H1 (cell line): ENCODE measurements at regions of chr13 and their contacts with region 1.

Region 1: DNA sequence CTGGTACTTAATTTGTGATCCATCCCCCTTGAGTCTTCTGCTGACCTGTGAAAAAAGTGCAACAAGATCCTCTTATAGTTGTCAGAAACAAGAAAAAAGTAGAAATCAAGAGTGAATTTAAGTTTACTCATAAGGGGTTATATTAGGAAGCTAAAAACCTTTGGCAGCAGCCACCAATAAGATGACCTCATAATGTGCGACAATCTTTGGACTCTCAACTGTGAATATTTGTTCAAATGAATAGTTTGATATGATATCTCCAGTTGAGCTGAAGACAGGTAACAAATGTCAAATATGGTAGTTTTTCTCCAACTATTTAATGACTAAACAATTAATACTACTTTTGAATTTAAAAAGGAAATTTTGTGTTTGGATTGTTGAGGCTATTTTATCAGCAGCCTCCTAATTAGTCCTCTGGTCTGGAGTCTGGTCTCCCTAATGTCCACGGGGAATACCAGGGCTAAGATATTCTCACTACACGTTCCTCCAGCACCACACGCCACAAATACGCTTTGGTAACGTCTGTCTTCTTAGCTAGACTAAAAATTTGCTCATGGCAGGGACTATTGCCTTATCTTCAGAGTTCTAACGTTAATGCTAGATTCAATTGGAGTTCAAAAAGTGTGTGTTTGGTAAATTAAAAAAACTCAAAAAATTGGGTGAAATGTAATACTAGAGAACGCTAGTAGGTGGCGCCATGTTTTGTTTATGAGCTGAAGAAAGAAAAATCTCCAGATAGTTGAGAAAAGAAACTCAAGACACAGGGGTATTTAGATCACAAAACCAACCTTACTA is 51.0 kb upstream of the PDX1 start:
- DNase-seq: no peak
- H3K4me3 ChIP-seq: no peak overlapping the region
- H3K27ac ChIP-seq: no peak overlapping the region
- H3K4me1 ChIP-seq: no peaks in the 10 kb centered on the region
- H3K27me3 ChIP-seq: no peaks in the 10 kb centered on the region; a peak in 1 of 7 replicates
- CTCF ChIP-seq: peak in 2 of 3 experiments; percentile 33 to 41; a peak in 2 of 4 replicates
- EP300 ChIP-seq: no peak
- POLR2A ChIP-seq: no peak
- RAD21 ChIP-seq: peak; percentile 34 to 39; a peak in 3 of 4 replicates

Region 2: GRCh38 chr13:27808851-27809550 is 59.8 kb before region 1 on chr13:
- CTCF ChIA-PET with region 1: no interaction called
- POLR2A ChIA-PET with region 1: no interaction called
- DNase-seq: no peak
- H3K4me3 ChIP-seq: no peak overlapping the region
- H3K27ac ChIP-seq: no peak overlapping the region
- H3K4me1 ChIP-seq: peaks cover 5 to 14% (median 10%) of the 10 kb centered on the region in 4 experiments
- H3K27me3 ChIP-seq: peaks cover 0 to 33% (median 11%) of the 10 kb centered on the region in 4 experiments; a peak in 4 of 7 replicates
- CTCF ChIP-seq: no peak
- EP300 ChIP-seq: no peak
- POLR2A ChIP-seq: no peak
- RAD21 ChIP-seq: no peak

Region 3: GRCh38 chr13:27896726-27897125 is 27.9 kb after region 1 on chr13:
- CTCF ChIA-PET with region 1: interaction called, 10 read pairs
- POLR2A ChIA-PET with region 1: no interaction called
- DNase-seq: no peak
- H3K4me3 ChIP-seq: no peak overlapping the region
- H3K27ac ChIP-seq: no peak overlapping the region
- H3K4me1 ChIP-seq: no peaks in the 10 kb centered on the region
- H3K27me3 ChIP-seq: no peaks in the 10 kb centered on the region
- CTCF ChIP-seq: no peak
- EP300 ChIP-seq: no peak
- POLR2A ChIP-seq: no peak
- RAD21 ChIP-seq: no peak

Region 4: DNA sequence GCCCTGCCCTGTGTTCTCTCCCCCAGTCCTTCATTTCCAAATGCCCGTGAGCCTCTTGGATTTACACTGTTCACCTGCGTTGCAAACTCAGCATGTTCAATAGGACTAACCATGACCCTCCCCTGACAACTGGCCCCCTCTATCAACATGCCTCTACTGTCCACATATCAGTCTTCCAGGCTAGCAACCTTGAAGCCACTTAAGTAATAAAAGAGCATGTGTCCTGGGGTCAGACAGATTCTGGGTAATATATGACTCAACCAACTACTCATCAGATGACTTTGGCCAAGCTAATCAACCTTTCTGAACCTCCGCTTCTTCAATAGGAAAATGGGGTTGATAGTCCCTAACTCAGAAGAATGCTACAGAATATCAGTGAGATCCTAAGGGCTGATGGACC is 35.9 kb after region 1 on chr13:
- CTCF ChIA-PET with region 1: interaction called, 10 read pairs
- POLR2A ChIA-PET with region 1: no interaction called
- DNase-seq: no peak
- H3K4me3 ChIP-seq: no peak overlapping the region
- H3K27ac ChIP-seq: no peak overlapping the region
- H3K4me1 ChIP-seq: no peaks in the 10 kb centered on the region
- H3K27me3 ChIP-seq: peaks cover 0 to 8% (median 4%) of the 10 kb centered on the region in 4 experiments; a peak in 5 of 7 replicates
- CTCF ChIP-seq: no peak
- EP300 ChIP-seq: no peak
- POLR2A ChIP-seq: no peak
- RAD21 ChIP-seq: no peak

Region 5: GRCh38 chr13:27919934-27920676 is 51.3 kb after region 1 on chr13 and contains the start of gene PDX1:
- CTCF ChIA-PET with region 1: interaction called, 14 read pairs
- POLR2A ChIA-PET with region 1: no interaction called
- DNase-seq: peak in 1 of 2 experiments; percentile 81
- H3K4me3 ChIP-seq: peak within 1 kb of the TSS in 2 of 4 experiments; percentile 7 to 49; a peak in 4 of 8 replicates
- H3K27ac ChIP-seq: no peak within 1 kb of the TSS
- H3K4me1 ChIP-seq: peaks cover 8 to 34% (median 22%) of the 10 kb centered on the region in 4 experiments
- H3K27me3 ChIP-seq: peaks cover 97 to 100% (median 100%) of the 10 kb centered on the region in 4 experiments
- CTCF ChIP-seq: no peak
- EP300 ChIP-seq: no peak
- POLR2A ChIP-seq: no peak
- RAD21 ChIP-seq: no peak
- total RNA-seq, gene PDX1: not detected in 2 replicates

Region 6: GRCh38 chr13:27960362-27961226 is 91.8 kb after region 1 on chr13:
- CTCF ChIA-PET with region 1: interaction called, 22 read pairs
- POLR2A ChIA-PET with region 1: no interaction called
- DNase-seq: peak in 1 of 2 experiments; percentile 95
- H3K4me3 ChIP-seq: peak overlapping the region in 3 of 4 experiments; percentile 11 to 49 (median 26); a peak in 4 of 8 replicates
- H3K27ac ChIP-seq: no peak overlapping the region
- H3K4me1 ChIP-seq: peaks cover 7 to 20% (median 12%) of the 10 kb centered on the region in 4 experiments; a peak in 6 of 7 replicates
- H3K27me3 ChIP-seq: peaks cover 90 to 100% (median 98%) of the 10 kb centered on the region in 4 experiments
- CTCF ChIP-seq: peak in 2 of 3 experiments; percentile 81 to 83; a peak in 3 of 4 replicates
- EP300 ChIP-seq: no peak
- POLR2A ChIP-seq: no peak
- RAD21 ChIP-seq: peak; percentile 74 to 85